Activated T-helper 1 cell treated with anti-CD3 and anti-CD28 coated beads, Interleukin-12 subunit alpha, Interleukin-12 subunit beta, Interleukin-2, Interleukin-4 antibody, amounts not matched to agents 30 ng/mL and 10 ng/mL and 1 ng/mL, durations not matched to agents 14 hours and 24 hours and 36 hours (primary cell): ENCODE measurements at regions of chr16 and their contacts with region 1.

Region 1: GRCh38 chr16:3099732-3100499 is 822 bp upstream of the ZSCAN10 start:
- DNase-seq: peak; percentile 87
- H3K4me3 Mint-ChIP-seq: peak overlapping the region; percentile 69
- H3K27ac Mint-ChIP-seq: peak overlapping the region; percentile 78
- H3K4me1 Mint-ChIP-seq: peaks cover 32% of the 10 kb centered on the region
- H3K27me3 Mint-ChIP-seq: no peaks in the 10 kb centered on the region

Region 2: GRCh38 chr16:3003582-3004302 is 96.2 kb before region 1 on chr16:
- intact Hi-C with region 1: loop called (anchors 1 kb)
- DNase-seq: peak; percentile 98
- H3K4me3 Mint-ChIP-seq: peak overlapping the region; percentile 74
- H3K27ac Mint-ChIP-seq: peak overlapping the region; percentile 21
- H3K4me1 Mint-ChIP-seq: peaks cover 22% of the 10 kb centered on the region
- H3K27me3 Mint-ChIP-seq: peaks cover 18% of the 10 kb centered on the region

Region 3: DNA sequence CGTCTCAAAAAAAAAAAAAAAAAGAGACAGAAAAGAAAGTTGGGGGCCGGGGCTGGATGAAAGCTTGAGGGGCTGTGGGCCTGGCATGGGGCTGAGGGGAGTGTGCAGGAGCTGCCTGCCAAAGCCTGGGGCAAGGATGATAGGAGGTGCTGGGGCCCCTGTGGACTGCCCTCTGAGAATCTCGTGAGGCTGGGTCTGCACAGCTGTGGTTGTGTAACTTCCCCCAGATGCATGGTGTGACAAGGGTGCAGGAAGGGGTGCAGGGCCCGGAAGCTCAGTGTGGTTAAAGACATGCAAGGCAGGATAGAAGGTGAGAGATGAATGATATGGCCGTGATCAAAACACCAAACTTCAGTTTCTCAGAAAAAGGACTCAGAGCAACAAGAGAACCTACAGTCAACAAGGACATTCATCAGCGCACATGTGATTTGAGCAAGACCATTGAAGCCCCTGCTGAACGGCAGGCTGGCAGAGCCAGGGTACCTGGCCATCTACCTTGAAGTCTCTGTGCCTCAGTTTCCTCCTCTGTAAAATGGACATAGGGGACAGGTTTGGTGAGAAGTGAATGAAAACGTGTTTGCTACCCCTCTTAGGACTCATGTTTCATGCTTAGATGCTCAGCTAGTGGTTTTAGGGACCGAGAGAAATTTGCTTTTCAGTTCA is 24.9 kb before region 1 on chr16:
- intact Hi-C with region 1: loop called (anchors 2 kb)
- DNase-seq: peak; percentile 85
- H3K4me3 Mint-ChIP-seq: peak overlapping the region; percentile 84
- H3K27ac Mint-ChIP-seq: peak overlapping the region; percentile 100
- H3K4me1 Mint-ChIP-seq: peaks cover 80% of the 10 kb centered on the region
- H3K27me3 Mint-ChIP-seq: peaks cover 2% of the 10 kb centered on the region

Region 4: DNA sequence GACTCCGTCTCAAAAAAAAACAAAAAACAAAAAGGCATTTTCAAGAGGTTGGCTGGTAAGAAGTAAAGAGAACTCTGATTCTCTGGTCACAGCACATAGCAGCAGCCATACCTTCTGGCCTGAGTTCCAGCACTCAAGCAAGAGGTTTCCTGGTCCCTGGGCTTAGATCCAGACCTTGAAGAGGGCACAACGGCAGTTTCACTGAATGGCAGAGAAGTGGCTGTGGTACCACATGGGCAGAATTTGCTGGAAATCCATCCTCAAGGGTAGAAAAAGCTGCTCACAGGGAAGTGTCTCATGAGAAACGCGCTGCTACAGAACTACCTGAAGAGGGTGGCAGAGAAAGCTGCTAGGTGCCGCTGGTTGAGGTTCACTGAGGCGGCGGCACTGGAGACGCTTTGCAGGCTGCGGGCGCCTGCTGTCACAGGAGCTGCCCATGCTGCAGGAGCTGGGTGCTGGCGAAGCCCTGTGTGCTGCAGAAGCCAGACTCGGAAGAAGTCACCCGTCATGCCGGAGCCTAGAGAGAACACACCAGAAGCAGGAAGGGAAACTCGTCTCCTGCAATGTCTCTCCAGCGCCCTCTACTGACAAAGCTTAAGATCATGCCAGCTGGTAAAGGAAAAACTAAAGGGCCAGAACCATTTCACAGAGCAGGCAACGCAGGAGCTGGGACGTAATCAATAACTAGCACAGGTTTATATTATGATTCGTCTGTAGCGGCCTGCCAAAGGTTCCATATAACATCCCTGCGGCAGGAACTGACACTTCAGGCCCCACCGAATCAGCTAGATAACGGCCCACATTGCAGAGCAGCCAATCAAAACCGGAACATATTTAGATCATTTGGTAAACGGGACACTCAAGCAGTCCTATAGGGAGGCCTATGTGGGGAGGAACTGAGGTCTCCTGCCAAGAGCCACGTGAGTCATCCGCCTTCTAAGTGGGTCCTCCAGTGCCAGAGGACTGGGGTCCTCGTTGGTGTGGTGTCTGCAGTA is 29.5 kb after region 1 on chr16:
- intact Hi-C with region 1: loop called (anchors 1 kb)
- DNase-seq: peak; percentile 81
- H3K4me3 Mint-ChIP-seq: peak overlapping the region; percentile 88
- H3K27ac Mint-ChIP-seq: peak overlapping the region; percentile 81
- H3K4me1 Mint-ChIP-seq: peaks cover 51% of the 10 kb centered on the region
- H3K27me3 Mint-ChIP-seq: no peaks in the 10 kb centered on the region

Region 5: DNA sequence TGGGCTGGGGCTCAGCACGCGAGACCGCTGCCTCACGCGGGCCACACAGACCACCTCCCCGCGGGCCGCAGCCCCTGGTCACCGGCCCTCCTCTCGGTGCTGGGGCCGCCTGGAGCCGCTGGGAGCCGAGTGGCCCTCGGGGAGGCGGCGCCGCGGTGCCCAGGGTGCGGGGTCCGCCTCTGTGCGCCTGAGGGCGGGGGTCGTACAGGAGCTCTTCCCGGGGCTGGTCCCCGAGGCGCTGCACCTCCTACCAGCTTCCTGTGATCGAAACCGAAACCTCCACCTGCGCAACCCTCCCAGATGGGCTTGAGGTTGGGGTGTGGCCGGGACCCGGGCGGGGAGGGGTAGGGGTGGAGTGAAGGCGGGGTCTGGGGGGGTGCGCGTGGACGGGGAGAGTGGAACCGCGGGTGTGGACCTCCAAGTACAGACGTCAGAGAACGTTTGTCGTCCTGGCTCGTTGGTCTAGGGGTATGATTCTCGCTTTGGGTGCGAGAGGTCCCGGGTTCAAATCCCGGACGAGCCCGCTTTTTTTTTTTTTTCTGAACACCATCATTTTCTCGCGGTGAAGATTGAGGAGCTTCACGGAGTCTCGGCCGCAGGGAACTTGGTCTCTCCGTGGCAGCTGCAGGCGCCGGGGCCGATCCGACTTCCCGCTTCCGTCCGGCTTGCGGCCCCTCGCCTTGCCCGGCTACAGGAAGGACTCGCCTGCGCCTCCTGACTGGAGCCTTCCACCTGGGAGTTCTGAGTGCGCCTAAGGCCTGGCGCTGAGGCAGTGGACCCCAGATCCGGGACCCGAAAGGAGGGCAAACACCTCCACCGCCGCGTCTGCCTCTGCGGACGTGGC is 58.8 kb after region 1 on chr16:
- intact Hi-C with region 1: loop called (anchors 2 kb)
- DNase-seq: peak; percentile 85
- H3K4me3 Mint-ChIP-seq: peak overlapping the region; percentile 89
- H3K27ac Mint-ChIP-seq: peak overlapping the region; percentile 94
- H3K4me1 Mint-ChIP-seq: peaks cover 40% of the 10 kb centered on the region
- H3K27me3 Mint-ChIP-seq: peaks cover 15% of the 10 kb centered on the region

Region 6: DNA sequence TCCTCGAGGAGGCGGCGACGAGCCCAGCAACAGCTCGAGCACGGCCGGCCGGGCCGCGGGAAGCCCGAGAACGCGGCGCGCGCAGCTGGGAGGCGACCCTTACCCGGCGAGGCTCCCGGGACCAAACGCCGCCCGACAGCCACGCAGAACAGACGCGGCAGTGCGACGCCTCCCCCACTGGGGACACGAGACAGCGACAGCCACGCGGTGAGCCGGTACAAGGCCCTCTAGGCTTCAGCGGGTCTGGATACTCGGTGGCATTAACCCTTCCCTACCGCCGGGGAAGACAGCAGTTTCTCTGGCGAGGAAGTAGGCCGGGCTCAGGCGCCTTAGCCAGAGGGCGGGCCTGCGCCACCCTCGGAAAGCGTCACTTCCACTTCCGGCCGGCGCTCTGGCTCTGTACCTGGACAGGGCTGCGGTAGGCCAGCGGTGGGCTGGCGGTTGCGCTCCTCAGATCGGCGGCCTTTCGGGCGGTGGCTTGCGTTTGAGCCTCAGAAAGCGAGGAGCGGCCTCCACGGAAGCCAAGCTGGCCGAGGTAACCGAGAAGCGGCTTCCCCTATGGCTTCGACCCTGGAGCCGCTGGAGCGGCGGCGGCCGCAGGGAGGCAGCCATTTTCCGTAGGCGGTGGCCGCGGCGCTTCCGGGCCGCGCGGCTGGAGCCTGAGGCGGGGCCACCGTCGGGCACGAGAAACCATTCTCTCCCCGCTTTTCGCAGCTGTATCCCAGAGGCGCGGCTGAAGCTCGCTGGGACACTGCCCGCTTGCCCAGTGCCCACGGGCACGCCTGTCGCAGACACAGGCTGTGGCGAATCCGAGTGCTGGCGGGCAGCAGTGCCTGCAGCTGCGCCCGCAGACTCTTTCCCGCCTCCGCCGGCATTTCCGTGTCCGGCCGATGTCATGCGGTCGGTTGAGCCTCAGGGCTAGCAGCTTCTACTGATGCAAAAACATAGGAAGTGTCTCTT is 205.5 kb after region 1 on chr16 and contains the starts of genes TIGD7 and ZNF75A:
- intact Hi-C with region 1: no loop called
- DNase-seq: peak; percentile 79
- H3K4me3 Mint-ChIP-seq: peak within 1 kb of the TSS; percentile 75
- H3K27ac Mint-ChIP-seq: peak within 1 kb of the TSS; percentile 70
- H3K4me1 Mint-ChIP-seq: peaks cover 8% of the 10 kb centered on the region
- H3K27me3 Mint-ChIP-seq: no peaks in the 10 kb centered on the region
- total RNA-seq, gene TIGD7: 2.0 and 3.1 TPM in 2 replicates
- total RNA-seq, gene ZNF75A: 26.5 and 27.6 TPM in 2 replicates